Endothelial cell of umbilical vein (primary cell): ENCODE measurements at regions of chr10 and their contacts with region 1.

Region 1: GRCh38 chr10:79347226-79347893 is at the start of gene PPIF:
- DNase-seq: peak; percentile 93
- H3K4me3 ChIP-seq: peak within 1 kb of the TSS; percentile 66 to 74 (median 72)
- H3K27ac ChIP-seq: peak within 1 kb of the TSS; percentile 74
- H3K4me1 ChIP-seq: peaks cover 11% of the 10 kb centered on the region
- H3K27me3 ChIP-seq: no peaks in the 10 kb centered on the region
- CTCF ChIP-seq: peak; percentile 88 to 94
- POLR2A ChIP-seq: peak; percentile 53
- total RNA-seq, gene PPIF: 42.7 and 51.2 TPM in 2 replicates

Region 2: GRCh38 chr10:78756604-78757349 is 590.6 kb before region 1 on chr10:
- CTCF ChIA-PET with region 1: no interaction called
- POLR2A ChIA-PET with region 1: no interaction called
- dilution Hi-C with region 1: no loop called
- intact Hi-C with region 1: loop called (anchors 10 kb)
- DNase-seq: peak; percentile 95
- H3K4me3 ChIP-seq: no peak overlapping the region
- H3K27ac ChIP-seq: peak overlapping the region; percentile 54
- H3K4me1 ChIP-seq: peaks cover 34% of the 10 kb centered on the region
- H3K27me3 ChIP-seq: peaks cover 0 to 6% of the 10 kb centered on the region in 2 experiments
- CTCF ChIP-seq: no peak
- POLR2A ChIP-seq: no peak

Region 3: GRCh38 chr10:79292891-79293746 is 54.2 kb before region 1 on chr10:
- CTCF ChIA-PET with region 1: interaction called, 5 read pairs
- POLR2A ChIA-PET with region 1: no interaction called
- dilution Hi-C with region 1: no loop called
- intact Hi-C with region 1: loop called (anchors 5 kb)
- DNase-seq: no peak
- H3K4me3 ChIP-seq: no peak overlapping the region
- H3K27ac ChIP-seq: peak overlapping the region; percentile 64
- H3K4me1 ChIP-seq: peaks cover 10% of the 10 kb centered on the region
- H3K27me3 ChIP-seq: no peaks in the 10 kb centered on the region
- CTCF ChIP-seq: peak; percentile 6 to 65
- POLR2A ChIP-seq: no peak

Region 4: GRCh38 chr10:79333478-79333877 is 13.9 kb before region 1 on chr10:
- CTCF ChIA-PET with region 1: interaction called, 10 read pairs
- POLR2A ChIA-PET with region 1: no interaction called
- dilution Hi-C with region 1: no loop called
- intact Hi-C with region 1: no loop called
- DNase-seq: no peak
- H3K4me3 ChIP-seq: no peak overlapping the region
- H3K27ac ChIP-seq: no peak overlapping the region
- H3K4me1 ChIP-seq: no peaks in the 10 kb centered on the region
- H3K27me3 ChIP-seq: no peaks in the 10 kb centered on the region
- CTCF ChIP-seq: no peak
- POLR2A ChIP-seq: no peak

Region 5: GRCh38 chr10:79400146-79401004 is 53.0 kb after region 1 on chr10:
- CTCF ChIA-PET with region 1: no interaction called
- POLR2A ChIA-PET with region 1: no interaction called
- dilution Hi-C with region 1: no loop called
- intact Hi-C with region 1: loop called (anchors 5 kb)
- DNase-seq: no peak
- H3K4me3 ChIP-seq: no peak overlapping the region
- H3K27ac ChIP-seq: no peak overlapping the region
- H3K4me1 ChIP-seq: peaks cover 26% of the 10 kb centered on the region
- H3K27me3 ChIP-seq: no peaks in the 10 kb centered on the region
- CTCF ChIP-seq: peak; percentile 75 to 86
- POLR2A ChIP-seq: no peak

Region 6: GRCh38 chr10:79463578-79464496 is 116.5 kb after region 1 on chr10:
- CTCF ChIA-PET with region 1: interaction called, 3 read pairs
- POLR2A ChIA-PET with region 1: no interaction called
- dilution Hi-C with region 1: no loop called
- intact Hi-C with region 1: loop called (anchors 1 kb)
- DNase-seq: no peak
- H3K4me3 ChIP-seq: no peak overlapping the region
- H3K27ac ChIP-seq: no peak overlapping the region
- H3K4me1 ChIP-seq: no peaks in the 10 kb centered on the region
- H3K27me3 ChIP-seq: peaks cover 12 to 42% of the 10 kb centered on the region in 2 experiments
- CTCF ChIP-seq: no peak
- POLR2A ChIP-seq: no peak